Upper lobe of right lung (tissue), 1 donor: ENCODE measurements at regions of chr9 and their contacts with region 1.

Region 1: GRCh38 chr9:124771867-124772679 is 962 bp upstream of the NR6A1 start:
- DNase-seq: peak; percentile 86
- ATAC-seq: peak; percentile 45
- H3K4me3 ChIP-seq: peak overlapping the region; percentile 84
- H3K27ac ChIP-seq: peak overlapping the region; percentile 73
- H3K4me1 ChIP-seq: peaks cover 11% of the 10 kb centered on the region
- H3K27me3 ChIP-seq: peaks cover 27% of the 10 kb centered on the region
- CTCF ChIP-seq: peak; percentile 95

Region 2: DNA sequence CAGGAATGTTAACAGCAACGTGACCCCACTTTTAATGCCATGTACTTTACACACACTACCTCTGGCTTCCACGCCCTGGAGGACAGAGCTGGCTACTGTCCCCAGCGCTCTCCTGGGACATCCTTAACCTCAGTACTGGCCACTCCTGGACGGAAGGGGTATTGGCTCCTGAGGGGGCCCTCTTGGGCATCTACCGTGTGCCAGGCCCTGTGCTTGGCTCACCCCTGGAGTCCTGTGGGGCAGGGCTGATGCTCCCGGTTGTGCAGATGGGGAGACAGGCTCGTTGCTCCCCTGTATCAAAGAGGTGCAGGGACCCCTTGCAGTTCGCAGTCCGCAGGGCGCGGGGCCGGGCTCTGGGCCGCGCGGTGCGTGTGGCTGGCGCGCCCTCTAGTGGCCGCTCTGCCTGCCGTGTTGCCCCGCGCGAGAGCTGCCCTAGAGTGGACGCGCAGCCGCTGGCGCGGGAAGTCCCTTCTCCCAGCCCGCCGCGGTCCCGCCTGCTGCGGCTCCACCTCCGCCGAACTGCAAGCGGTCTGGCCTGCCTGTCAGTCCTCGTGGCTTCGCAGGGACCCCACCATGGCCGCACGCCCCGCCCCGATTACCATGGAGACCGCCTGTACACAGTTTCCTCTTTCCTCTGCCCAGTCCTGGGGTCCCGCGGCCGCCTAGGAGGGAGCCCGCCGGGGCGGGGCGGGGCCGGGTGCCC is 80.9 kb after region 1 on chr9 and contains the start of gene WDR38:
- intact Hi-C with region 1: loop called (anchors 2 kb)
- DNase-seq: peak; percentile 88
- ATAC-seq: peak; percentile 94
- H3K4me3 ChIP-seq: peak within 1 kb of the TSS; percentile 42
- H3K27ac ChIP-seq: no peak within 1 kb of the TSS
- H3K4me1 ChIP-seq: peaks cover 9% of the 10 kb centered on the region
- H3K27me3 ChIP-seq: no peaks in the 10 kb centered on the region
- CTCF ChIP-seq: peak; percentile 98
- total RNA-seq, gene WDR38: not detected

Region 3: GRCh38 chr9:124934290-124934689 is 162.2 kb after region 1 on chr9:
- intact Hi-C with region 1: no loop called
- DNase-seq: no peak
- ATAC-seq: no peak
- H3K4me3 ChIP-seq: no peak overlapping the region
- H3K27ac ChIP-seq: no peak overlapping the region
- H3K4me1 ChIP-seq: no peaks in the 10 kb centered on the region
- H3K27me3 ChIP-seq: no peaks in the 10 kb centered on the region
- CTCF ChIP-seq: no peak